Naive thymus-derived CD4-positive, alpha-beta T cell (primary cell): ENCODE measurements at regions of chr5 and their contacts with region 1.

Region 1: DNA sequence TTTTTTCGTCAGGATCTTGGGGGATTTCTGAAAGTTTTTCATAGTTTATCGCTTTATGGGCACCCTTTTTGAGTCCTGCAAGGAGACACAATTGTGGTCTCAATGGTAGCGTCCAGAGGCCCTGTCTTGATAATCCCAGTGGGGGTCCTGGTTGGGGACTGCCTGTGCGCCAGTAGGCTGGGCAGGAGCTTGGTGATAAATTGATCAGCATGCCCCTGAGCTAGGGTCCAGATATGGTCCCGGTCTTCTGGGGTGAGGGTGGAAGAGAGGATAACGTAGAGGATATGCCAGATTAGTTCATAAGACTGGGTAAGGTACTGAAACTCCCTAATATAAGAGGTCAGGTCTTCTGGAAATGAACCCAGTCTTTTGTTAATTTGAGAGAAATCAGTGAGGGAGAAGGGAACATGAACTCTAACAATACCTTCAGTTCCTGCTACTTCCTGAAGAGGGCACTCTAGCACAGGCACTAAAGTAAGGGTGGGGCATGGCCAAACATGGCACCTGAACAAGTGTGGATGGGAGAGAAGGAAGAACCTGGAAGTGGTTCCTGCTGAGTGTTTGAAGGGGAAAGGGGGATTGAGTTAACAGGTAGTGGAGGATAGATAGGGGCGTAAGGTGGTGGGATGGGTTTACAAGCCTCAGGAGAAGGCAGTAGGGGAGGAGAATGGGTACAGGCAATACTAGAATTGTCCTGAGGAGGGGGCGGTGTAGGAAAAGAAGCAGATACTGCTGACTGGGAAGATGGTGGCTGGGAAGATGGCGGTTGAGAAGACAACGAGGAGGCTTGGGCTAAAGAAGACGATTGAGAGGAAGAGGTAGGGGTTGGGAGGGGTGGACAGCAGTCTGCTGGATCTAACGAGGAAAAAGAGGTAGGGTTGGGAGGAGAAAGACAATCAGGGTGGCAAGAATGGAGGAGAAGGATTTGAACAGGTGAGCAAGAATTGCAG is 33.8 kb upstream of the ANXA2R start:
- DNase-seq: peak; percentile 7 to 73 (median 65)
- ATAC-seq: peak; percentile 80
- H3K4me3 ChIP-seq: no peak overlapping the region
- H3K4me3 Mint-ChIP-seq: peak overlapping the region in 3 of 10 donors; percentile 12 to 50 (median 18)
- H3K27ac ChIP-seq: no peak overlapping the region
- H3K27ac Mint-ChIP-seq: peak overlapping the region in 7 of 9 donors; percentile 19 to 83 (median 36)
- H3K4me1 ChIP-seq: peaks cover 6 to 22% of the 10 kb centered on the region in 2 donors
- H3K4me1 Mint-ChIP-seq: peaks cover 42 to 77% (median 61%) of the 10 kb centered on the region in 7 donors
- H3K27me3 ChIP-seq: no peaks in the 10 kb centered on the region
- H3K27me3 Mint-ChIP-seq: no peaks in the 10 kb centered on the region

Region 2: DNA sequence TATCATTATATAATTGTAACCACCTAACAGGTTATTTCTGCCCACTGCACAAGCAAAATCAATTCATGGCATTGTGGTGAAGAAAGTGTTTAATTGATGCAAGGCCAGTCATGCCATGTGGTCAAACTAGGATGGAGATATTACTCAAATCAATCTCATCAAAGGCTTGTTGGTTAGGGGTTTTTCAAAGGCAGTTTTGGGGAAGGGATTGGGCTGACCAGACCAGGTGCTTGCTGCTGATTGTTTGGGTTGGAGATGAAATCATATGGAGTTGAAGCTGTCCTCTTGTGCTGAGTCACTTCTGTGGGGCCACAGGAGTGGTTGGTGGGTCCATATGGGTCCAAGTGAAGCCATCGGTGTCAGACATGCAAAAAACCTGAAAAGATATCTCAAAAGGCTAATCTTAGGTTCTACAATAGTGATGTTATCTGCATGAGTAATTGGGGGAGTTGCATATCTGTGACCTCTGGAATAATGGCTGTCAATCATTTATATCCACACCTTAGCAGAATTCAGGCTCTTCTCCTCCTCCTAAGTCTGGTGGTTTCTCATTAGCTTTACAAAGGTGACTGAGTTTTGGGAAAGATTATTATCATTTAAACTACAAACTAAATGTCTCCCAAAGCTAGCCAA is 194.4 kb after region 1 on chr5:
- CTCF ChIA-PET with region 1: no interaction called
- POLR2A ChIA-PET with region 1: no interaction called
- intact Hi-C with region 1: no loop called
- DNase-seq: no peak
- ATAC-seq: no peak
- H3K4me3 ChIP-seq: no peak overlapping the region
- H3K4me3 Mint-ChIP-seq: no peak overlapping the region
- H3K27ac ChIP-seq: no peak overlapping the region
- H3K27ac Mint-ChIP-seq: no peak overlapping the region
- H3K4me1 ChIP-seq: no peaks in the 10 kb centered on the region
- H3K4me1 Mint-ChIP-seq: peaks cover 0 to 10% (median 2%) of the 10 kb centered on the region in 7 donors
- H3K27me3 ChIP-seq: no peaks in the 10 kb centered on the region
- H3K27me3 Mint-ChIP-seq: peaks cover 18 to 41% (median 36%) of the 10 kb centered on the region in 5 donors

Region 3: GRCh38 chr5:43305948-43306565 is 232.2 kb after region 1 on chr5:
- CTCF ChIA-PET with region 1: no interaction called
- POLR2A ChIA-PET with region 1: no interaction called
- intact Hi-C with region 1: loop called (anchors 1 kb)
- DNase-seq: peak in 7 of 9 donors; percentile 24 to 64 (median 50)
- ATAC-seq: peak; percentile 79
- H3K4me3 ChIP-seq: no peak overlapping the region
- H3K4me3 Mint-ChIP-seq: peak overlapping the region in 1 of 10 donors; percentile 18
- H3K27ac ChIP-seq: no peak overlapping the region
- H3K27ac Mint-ChIP-seq: peak overlapping the region in 6 of 9 donors; percentile 4 to 86 (median 30)
- H3K4me1 ChIP-seq: peaks cover 0 to 10% of the 10 kb centered on the region in 2 donors
- H3K4me1 Mint-ChIP-seq: peaks cover 21 to 82% (median 52%) of the 10 kb centered on the region in 7 donors
- H3K27me3 ChIP-seq: no peaks in the 10 kb centered on the region
- H3K27me3 Mint-ChIP-seq: no peaks in the 10 kb centered on the region

Region 4: DNA sequence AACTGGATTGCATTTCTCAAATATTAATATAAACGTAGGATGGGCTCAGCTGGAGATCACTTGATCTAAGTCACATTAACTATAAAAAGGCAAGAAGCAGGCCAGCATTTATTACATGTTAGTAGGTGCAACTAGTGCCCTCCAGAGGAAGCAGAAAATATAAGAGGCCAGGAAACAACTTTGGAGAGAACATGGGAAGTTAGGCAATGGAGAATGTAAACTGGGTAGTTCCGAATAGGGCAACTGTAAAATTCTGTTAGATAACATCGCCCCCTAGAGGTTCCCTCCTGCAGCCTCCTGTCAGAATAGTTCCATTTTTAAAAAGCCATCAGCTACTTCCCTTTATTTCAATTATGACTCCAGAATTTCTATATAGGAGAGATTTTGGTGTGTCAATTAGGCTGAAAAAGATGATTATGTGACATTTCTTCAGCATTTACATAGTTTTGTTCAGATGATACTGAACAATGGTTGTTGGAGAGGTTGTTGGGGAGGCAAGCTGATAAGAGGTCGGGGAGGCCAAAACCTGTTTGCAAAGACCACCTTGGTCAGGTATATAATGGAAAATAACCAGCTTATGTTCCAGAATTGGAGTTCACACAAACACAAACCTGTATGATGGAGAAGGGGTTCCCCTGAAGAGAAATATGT is 315.9 kb after region 1 on chr5:
- CTCF ChIA-PET with region 1: no interaction called
- POLR2A ChIA-PET with region 1: no interaction called
- intact Hi-C with region 1: loop called (anchors 1 kb)
- DNase-seq: peak in 8 of 9 donors; percentile 28 to 60 (median 50)
- ATAC-seq: peak; percentile 92
- H3K4me3 ChIP-seq: no peak overlapping the region
- H3K4me3 Mint-ChIP-seq: no peak overlapping the region
- H3K27ac ChIP-seq: no peak overlapping the region
- H3K27ac Mint-ChIP-seq: peak overlapping the region in 2 of 9 donors; percentile 62 to 67
- H3K4me1 ChIP-seq: peaks cover 0 to 7% of the 10 kb centered on the region in 2 donors
- H3K4me1 Mint-ChIP-seq: peaks cover 4 to 48% (median 34%) of the 10 kb centered on the region in 7 donors
- H3K27me3 ChIP-seq: no peaks in the 10 kb centered on the region
- H3K27me3 Mint-ChIP-seq: no peaks in the 10 kb centered on the region